ENCODE measurements at regions of chr6 and their contacts with region 1.

Region 1: GRCh38 chr6:111210194-111210728 is 123.0 kb downstream of the SLC16A10 start:
- H3K4me3 Mint-ChIP-seq: no peak overlapping the region
- H3K27ac Mint-ChIP-seq: no peak overlapping the region
- H3K4me1 Mint-ChIP-seq: peaks cover 6% of the 10 kb centered on the region
- H3K27me3 Mint-ChIP-seq: no peaks in the 10 kb centered on the region

Region 2: DNA sequence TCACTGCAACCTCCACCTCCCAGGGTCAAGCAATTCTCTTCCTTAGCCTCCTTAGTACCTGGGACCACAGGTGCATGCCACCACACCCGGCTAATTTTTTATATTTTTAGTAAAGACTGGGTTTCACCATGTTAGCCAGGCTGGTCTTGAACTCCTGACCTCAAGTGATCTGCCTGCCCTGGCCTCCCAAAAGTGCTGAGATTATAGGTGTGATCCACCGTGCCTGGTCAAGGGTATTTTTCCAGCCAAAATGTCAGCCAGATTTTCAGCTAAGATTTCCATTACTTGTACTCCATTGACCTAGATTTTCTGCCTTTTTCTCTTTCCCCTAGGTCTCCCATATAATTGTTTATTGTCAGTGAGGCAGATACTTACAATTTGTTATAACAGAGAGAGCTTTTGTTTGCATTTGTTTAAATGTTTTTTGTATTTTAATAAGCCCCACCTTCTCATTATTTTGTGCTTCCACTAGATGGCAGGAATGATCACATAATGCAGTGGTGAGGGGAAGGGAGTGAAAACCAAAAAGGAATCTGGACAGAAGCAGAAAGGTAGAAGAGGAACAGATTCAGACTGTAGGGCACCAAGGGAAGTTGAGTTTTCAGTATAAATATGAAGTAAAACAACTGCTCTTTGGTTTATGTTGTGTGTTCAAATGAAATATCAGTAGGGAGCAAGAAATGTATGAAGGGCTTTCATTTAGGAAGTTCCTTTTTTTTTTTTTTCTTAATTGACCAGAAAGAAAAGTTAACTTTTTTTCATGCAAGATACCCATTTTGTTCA is 198.7 kb before region 1 on chr6:
- intact Hi-C with region 1: loop called (anchors 1 kb)
- H3K4me3 Mint-ChIP-seq: no peak overlapping the region
- H3K27ac Mint-ChIP-seq: peak overlapping the region; percentile 40
- H3K4me1 Mint-ChIP-seq: peaks cover 11% of the 10 kb centered on the region
- H3K27me3 Mint-ChIP-seq: no peaks in the 10 kb centered on the region

Region 3: GRCh38 chr6:111057074-111057752 is 153.0 kb before region 1 on chr6:
- intact Hi-C with region 1: loop called (anchors 1 kb)
- H3K4me3 Mint-ChIP-seq: no peak overlapping the region
- H3K27ac Mint-ChIP-seq: no peak overlapping the region
- H3K4me1 Mint-ChIP-seq: no peaks in the 10 kb centered on the region
- H3K27me3 Mint-ChIP-seq: peaks cover 4% of the 10 kb centered on the region